H1 (cell line): ENCODE measurements at regions of chr1 and their contacts with region 1.

Region 1: GRCh38 chr1:53393325-53393792 is 65.5 kb upstream of the LRP8 start:
- DNase-seq: peak; percentile 39 to 97
- H3K4me3 ChIP-seq: no peak overlapping the region
- H3K27ac ChIP-seq: no peak overlapping the region
- H3K4me1 ChIP-seq: peaks cover 4 to 16% (median 10%) of the 10 kb centered on the region in 4 experiments; a peak in 6 of 7 replicates
- H3K27me3 ChIP-seq: no peaks in the 10 kb centered on the region; a peak in 2 of 7 replicates
- CTCF ChIP-seq: peak; percentile 79 to 94 (median 89)
- EP300 ChIP-seq: no peak
- POLR2A ChIP-seq: no peak
- RAD21 ChIP-seq: peak; percentile 89 to 92

Region 2: GRCh38 chr1:53272349-53273315 is 120.7 kb before region 1 on chr1:
- CTCF ChIA-PET with region 1: interaction called, 85 read pairs
- POLR2A ChIA-PET with region 1: no interaction called
- DNase-seq: no peak
- H3K4me3 ChIP-seq: no peak overlapping the region
- H3K27ac ChIP-seq: no peak overlapping the region
- H3K4me1 ChIP-seq: no peaks in the 10 kb centered on the region
- H3K27me3 ChIP-seq: no peaks in the 10 kb centered on the region
- CTCF ChIP-seq: no peak
- EP300 ChIP-seq: no peak
- POLR2A ChIP-seq: no peak
- RAD21 ChIP-seq: no peak

Region 3: DNA sequence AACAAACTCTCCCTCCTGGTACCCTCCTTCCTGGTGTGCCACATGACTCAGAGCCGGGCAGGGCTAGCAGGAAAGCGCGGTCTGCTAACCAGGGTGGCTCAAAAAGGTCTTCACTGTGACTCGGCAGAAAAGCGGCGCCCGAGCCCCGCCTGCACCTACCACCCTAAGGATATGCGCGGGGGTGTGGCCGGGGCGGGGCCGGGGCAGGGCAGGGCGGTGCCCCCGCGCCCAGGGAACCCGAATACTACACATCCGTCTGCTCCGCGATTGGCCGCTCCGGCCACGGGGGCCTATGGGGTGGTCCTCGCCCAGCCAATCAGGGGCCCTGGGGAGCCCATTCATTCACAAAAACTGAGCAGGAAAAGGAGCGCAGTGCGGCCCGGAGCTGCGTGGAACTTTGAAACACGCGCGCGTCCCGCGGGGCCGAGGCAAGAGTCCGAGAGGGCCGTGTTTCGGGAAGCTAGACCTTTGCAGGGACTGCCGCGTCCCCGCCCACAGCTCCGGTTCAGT is 67.2 kb before region 1 on chr1:
- CTCF ChIA-PET with region 1: interaction called, 13 read pairs
- POLR2A ChIA-PET with region 1: interaction called, 5 read pairs
- DNase-seq: peak; percentile 83 to 93
- H3K4me3 ChIP-seq: peak overlapping the region; percentile 74 to 85 (median 80)
- H3K27ac ChIP-seq: peak overlapping the region; percentile 78; the same call in 1 of the 2 replicates
- H3K4me1 ChIP-seq: peaks cover 4 to 15% (median 9%) of the 10 kb centered on the region in 4 experiments
- H3K27me3 ChIP-seq: no peaks in the 10 kb centered on the region
- CTCF ChIP-seq: no peak
- EP300 ChIP-seq: no peak
- POLR2A ChIP-seq: peak in 1 of 2 experiments; percentile 76; a peak in 2 of 3 replicates
- RAD21 ChIP-seq: no peak

Region 4: DNA sequence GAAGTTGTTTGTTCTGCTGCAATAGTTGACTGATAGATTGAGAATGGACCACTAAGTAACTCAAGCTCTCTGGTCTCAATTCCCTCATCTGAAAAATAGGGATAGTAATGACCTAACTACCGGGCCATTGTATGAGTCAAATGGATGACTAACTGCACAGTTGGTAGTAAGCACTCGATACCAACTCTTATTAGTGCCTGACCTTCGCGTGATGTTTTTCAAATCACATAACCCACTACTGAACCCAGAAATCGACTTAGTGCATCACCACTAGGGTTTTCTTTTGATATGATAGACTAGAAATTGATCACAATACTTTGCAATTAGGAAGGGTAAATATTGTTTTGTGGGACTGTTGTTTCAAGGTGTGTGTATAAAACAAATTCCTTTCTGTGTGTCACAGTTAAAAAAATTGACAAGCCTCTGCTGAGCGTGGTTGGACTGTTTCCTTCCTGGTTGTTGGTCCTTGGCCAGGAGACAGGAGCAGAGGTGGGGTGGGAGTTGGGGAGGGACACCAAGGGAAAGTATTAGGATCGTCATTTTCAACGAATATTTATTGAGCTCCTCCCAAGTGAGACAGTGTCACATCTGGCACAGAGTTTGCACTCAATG is 11.5 kb before region 1 on chr1:
- CTCF ChIA-PET with region 1: interaction called, 27 read pairs
- POLR2A ChIA-PET with region 1: no interaction called
- DNase-seq: no peak
- H3K4me3 ChIP-seq: no peak overlapping the region
- H3K27ac ChIP-seq: no peak overlapping the region
- H3K4me1 ChIP-seq: no peaks in the 10 kb centered on the region
- H3K27me3 ChIP-seq: peaks cover 0 to 6% (median 1%) of the 10 kb centered on the region in 4 experiments; a peak in 4 of 7 replicates
- CTCF ChIP-seq: no peak
- EP300 ChIP-seq: no peak
- POLR2A ChIP-seq: no peak
- RAD21 ChIP-seq: no peak

Region 5: DNA sequence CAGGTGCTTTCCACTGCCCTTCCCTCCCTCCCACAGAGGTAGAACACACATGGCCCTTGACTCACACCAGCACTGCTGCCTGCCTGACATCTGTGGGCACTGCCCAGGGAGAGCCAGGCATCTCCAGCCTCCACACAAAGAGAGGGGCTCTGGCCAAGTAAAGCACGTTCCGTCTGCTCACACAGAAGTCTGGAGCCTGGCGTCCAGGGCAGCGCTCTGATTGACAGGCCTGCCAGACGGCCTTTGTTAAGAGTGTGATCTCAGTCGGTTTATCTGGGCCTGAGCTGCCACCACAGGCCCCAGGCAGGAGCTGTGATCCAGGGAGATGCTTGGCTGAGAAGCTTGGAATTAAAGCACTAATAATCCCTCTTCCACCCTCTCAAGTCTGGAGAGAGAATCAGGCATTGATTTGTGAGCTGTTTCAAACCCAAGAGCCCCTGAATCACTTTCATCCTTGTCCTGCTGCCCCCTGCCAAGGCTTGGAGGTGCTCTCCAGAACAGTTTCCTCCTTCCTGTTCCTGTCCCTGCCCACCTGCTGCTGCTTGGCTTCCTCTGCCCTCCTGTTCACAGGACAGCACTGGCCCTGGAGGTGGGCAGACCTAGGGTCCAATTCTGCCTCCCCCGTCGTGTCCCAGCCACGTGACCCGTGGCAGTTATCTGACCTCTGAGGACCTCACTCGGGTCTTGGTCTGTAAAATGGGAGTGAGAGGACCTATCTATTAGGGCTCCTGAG is 69.6 kb after region 1 on chr1:
- CTCF ChIA-PET with region 1: interaction called, 14 read pairs
- POLR2A ChIA-PET with region 1: no interaction called
- DNase-seq: no peak
- H3K4me3 ChIP-seq: no peak overlapping the region
- H3K27ac ChIP-seq: no peak overlapping the region
- H3K4me1 ChIP-seq: no peaks in the 10 kb centered on the region; a peak in 3 of 7 replicates
- H3K27me3 ChIP-seq: peaks cover 0 to 4% (median 0%) of the 10 kb centered on the region in 4 experiments; a peak in 1 of 7 replicates
- CTCF ChIP-seq: no peak
- EP300 ChIP-seq: no peak
- POLR2A ChIP-seq: no peak
- RAD21 ChIP-seq: no peak